ENCODE measurements at regions of chr3 and their contacts with region 1.

Region 1: DNA sequence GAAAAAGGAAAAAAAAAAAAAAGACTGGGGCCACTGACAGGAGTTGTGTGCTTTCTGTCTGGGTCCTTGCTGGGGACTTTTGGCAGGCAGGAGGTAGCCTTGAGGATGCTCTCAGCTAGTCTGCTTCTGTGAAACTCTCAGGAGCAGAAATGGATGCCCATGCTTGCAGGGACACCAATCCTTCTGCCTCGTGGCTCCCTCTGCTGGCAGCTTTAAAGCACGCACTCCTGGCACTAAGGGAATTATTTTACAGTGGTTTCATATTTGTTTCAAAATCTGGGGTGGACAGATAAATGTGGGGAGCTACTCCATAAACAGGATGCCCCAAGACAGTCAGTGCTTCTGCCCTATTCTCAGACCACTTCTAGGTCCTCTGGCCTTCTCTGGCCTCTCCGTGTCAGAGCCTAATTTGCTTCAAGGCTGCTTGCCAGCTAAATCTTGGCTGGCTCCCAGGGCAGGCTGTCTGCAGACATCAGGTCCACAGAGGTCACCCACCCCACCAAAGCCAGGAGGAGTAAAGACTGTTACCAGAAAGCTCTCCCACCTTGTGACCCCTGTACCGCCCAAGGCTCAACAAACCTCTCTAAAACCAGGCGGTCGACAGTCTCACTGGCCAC is 17.1 kb downstream of the TRAIP start:
- DNase-seq: peak; percentile 80 to 88 (median 85)
- ATAC-seq: peak; percentile 66 to 88 (median 83)
- H3K4me3 ChIP-seq: no peak overlapping the region
- H3K27ac ChIP-seq: peak overlapping the region in 9 of 12 donors; percentile 9 to 75 (median 42)
- H3K4me1 ChIP-seq: peaks cover 5 to 34% (median 23%) of the 10 kb centered on the region in 12 donors
- H3K27me3 ChIP-seq: no peaks in the 10 kb centered on the region
- CTCF ChIP-seq: peak; percentile 81 to 97 (median 91)
- POLR2A ChIP-seq: no peak

Region 2: DNA sequence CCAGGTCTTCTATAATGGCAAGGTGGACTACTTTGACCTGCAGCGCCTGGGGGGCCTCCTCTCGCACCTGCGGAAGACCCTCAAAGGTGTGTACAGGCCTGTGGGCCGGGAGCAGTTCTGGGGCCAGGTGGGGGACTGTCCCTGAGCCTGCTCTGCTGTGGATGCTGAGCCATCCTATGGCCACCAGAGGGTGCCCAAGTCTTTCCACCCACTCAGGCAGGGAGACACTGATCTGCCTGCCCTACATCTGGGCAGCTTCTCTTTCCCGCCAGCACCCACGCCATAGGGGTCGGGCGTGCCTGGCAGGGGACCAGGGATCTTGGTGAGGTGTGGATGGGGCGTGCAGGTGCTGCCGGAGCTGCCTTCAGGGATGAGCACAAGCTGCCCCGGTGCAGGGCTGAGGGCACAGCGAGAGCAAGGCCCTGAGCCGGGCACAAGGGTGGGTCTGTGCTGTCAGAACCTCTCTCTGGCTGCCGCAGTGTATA is 135.8 kb before region 1 on chr3:
- intact Hi-C with region 1: loop called in 5 of 10 experiments (anchors 2 to 10 kb)
- DNase-seq: peak in 3 of 5 donors; percentile 56 to 64 (median 56)
- ATAC-seq: peak; percentile 34 to 78 (median 64)
- H3K4me3 ChIP-seq: no peak overlapping the region
- H3K27ac ChIP-seq: no peak overlapping the region
- H3K4me1 ChIP-seq: peaks cover 0 to 21% (median 4%) of the 10 kb centered on the region in 12 donors
- H3K27me3 ChIP-seq: no peaks in the 10 kb centered on the region
- CTCF ChIP-seq: peak; percentile 59 to 80 (median 74)
- POLR2A ChIP-seq: no peak

Region 3: DNA sequence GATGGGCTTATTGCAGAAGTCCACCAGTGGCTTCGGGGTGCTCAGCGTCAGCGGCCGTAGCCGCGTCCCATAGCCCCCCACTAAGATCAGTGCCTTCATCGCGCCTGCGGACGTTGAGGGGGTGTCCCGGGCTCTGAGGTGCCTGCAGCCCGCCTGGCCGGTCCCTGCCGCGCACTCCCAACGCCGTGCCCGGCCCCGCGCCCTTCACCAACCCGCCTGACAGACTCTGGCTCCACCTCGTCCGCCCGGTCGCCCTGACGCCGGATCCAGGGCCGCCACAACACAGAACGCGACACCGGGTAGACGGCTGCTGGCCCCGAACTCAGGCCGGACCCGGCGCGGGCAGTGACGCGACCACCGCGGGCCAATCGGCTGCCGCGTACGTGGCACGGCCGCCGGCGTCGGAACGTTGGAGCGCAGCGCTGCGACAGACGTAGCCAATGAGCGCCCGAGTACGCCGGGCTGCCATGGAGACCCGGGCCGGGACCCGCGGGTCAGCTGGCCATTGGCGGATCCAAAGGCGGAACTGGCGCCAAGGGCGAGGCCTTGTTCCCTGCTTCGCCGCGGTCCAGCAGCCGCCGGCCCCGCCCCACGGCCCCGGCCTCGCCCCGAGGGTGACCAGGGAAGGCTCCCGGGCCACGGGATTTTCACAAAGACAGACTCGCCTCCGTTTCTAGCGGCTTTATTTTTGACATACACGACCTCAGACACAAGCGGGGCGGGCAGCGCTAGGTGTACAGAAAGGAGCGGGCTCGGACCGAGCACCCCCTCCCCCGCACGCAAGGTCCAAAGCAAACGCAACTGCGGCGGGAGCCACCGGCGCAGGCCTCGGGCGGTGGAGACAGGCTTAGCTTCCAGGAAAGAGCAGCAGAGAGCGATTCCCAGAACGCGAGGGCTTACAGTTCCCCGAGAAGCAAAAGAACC is 115.4 kb before region 1 on chr3 and contains the start of gene GMPPB:
- intact Hi-C with region 1: loop called in 1 of 10 experiments (anchors 10 kb)
- DNase-seq: peak; percentile 98 to 99 (median 99)
- ATAC-seq: peak; percentile 81 to 90 (median 88)
- H3K4me3 ChIP-seq: peak within 1 kb of the TSS; percentile 73 to 100 (median 96)
- H3K27ac ChIP-seq: peak within 1 kb of the TSS; percentile 60 to 98 (median 92)
- H3K4me1 ChIP-seq: peaks cover 11 to 37% (median 24%) of the 10 kb centered on the region in 12 donors
- H3K27me3 ChIP-seq: no peaks in the 10 kb centered on the region
- CTCF ChIP-seq: peak in 1 of 12 donors; percentile 2
- POLR2A ChIP-seq: peak in 1 of 2 donors; percentile 78
- total RNA-seq, gene GMPPB: 9.4 to 21.8 (median 13.7) TPM

Region 4: GRCh38 chr3:49802719-49803464 is 36.4 kb before region 1 on chr3 and contains the start of gene INKA1:
- intact Hi-C with region 1: loop called (anchors 1 to 2 kb)
- DNase-seq: peak; percentile 92 to 95 (median 93)
- ATAC-seq: peak; percentile 77 to 84 (median 82)
- H3K4me3 ChIP-seq: peak within 1 kb of the TSS; percentile 69 to 98 (median 84)
- H3K27ac ChIP-seq: peak within 1 kb of the TSS; percentile 86 to 99 (median 98)
- H3K4me1 ChIP-seq: peaks cover 23 to 58% (median 47%) of the 10 kb centered on the region in 12 donors
- H3K27me3 ChIP-seq: no peaks in the 10 kb centered on the region
- CTCF ChIP-seq: peak in 11 of 12 donors; percentile 88 to 97 (median 92)
- POLR2A ChIP-seq: peak in 1 of 2 donors; percentile 78
- total RNA-seq, gene INKA1: 1.1 to 5.0 (median 3.3) TPM

Region 5: DNA sequence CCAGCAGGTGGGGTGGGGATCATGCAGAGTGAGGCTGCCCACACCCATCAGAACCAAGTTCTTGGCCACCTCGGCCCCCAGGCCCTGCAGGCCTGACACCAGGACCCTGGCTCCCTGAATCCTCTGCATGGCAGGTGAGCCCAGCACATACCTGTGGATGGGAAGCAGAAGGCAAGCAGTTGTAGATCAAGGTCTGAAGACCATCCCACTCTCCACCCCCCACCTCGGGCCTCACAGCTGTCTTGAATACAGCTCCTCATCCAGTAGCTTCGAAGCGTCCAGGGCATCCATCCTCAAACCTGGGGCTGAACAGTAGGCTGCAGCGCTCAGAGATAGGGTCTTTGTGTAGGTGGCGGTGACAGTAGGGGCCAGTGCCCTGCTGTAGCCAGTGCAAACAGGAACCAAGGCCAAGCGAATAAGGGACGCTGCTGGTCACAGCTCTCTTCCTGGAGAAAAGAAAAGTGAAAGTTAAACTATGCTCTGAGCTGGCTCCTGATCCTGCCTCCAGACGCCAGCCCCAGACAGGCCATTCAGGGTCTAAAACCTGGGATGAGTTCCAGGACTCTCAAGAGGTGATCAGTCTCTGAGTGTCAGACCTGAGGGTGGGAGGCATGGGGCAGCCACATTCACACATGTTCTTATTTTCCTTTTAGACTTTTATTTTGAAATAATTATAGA is 25.7 kb before region 1 on chr3 and contains the start of gene UBA7:
- intact Hi-C with region 1: loop called in 1 of 10 experiments (anchors 2 kb)
- DNase-seq: peak; percentile 61 to 74 (median 69)
- ATAC-seq: peak; percentile 70 to 95 (median 90)
- H3K4me3 ChIP-seq: peak within 1 kb of the TSS; percentile 27 to 80 (median 57)
- H3K27ac ChIP-seq: peak within 1 kb of the TSS; percentile 71 to 92 (median 82)
- H3K4me1 ChIP-seq: peaks cover 8 to 33% (median 21%) of the 10 kb centered on the region in 12 donors
- H3K27me3 ChIP-seq: no peaks in the 10 kb centered on the region
- CTCF ChIP-seq: no peak
- POLR2A ChIP-seq: no peak
- total RNA-seq, gene UBA7: 13.7 to 72.1 (median 22.1) TPM

Region 6: GRCh38 chr3:49886922-49887265 is 47.6 kb after region 1 on chr3:
- intact Hi-C with region 1: no loop called
- DNase-seq: no peak
- ATAC-seq: no peak
- H3K4me3 ChIP-seq: no peak overlapping the region
- H3K27ac ChIP-seq: no peak overlapping the region
- H3K4me1 ChIP-seq: peaks cover 0 to 18% (median 8%) of the 10 kb centered on the region in 12 donors
- H3K27me3 ChIP-seq: no peaks in the 10 kb centered on the region
- CTCF ChIP-seq: no peak
- POLR2A ChIP-seq: no peak

Region 7: DNA sequence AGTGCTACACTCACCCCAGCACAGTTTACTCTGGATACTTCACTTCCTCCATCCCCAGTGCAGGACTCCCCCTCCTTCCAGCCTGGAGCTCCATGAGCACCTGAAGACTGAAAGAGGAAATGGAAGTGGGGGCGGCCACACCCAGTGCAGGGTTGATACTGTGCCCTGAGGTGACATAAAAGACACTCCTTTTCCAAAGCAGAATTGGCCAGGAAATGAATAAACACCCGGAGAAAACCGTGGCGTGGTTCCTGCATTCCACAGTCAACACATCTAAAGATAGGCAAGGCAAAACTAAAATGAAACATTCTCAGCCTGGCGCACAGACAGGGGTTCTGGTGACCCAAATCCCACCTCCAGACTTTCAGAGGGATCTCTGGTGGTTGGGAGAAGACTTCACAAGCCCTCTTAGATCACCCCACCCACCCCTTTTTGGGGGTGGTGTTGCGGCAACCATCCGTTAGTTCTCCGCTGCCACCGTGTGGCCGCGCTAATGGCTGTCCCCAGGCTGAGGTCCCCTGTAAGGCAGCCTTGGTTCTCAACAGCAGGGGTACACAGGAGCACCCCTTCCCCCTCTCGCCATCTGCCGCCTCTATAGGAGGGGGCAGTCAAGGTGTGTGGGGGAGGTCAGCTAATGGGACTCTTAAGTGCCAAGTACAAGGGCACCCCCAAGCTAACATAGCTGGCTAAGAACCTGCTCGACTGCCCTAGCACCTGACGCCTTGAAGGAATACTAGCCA is 66.9 kb after region 1 on chr3:
- intact Hi-C with region 1: loop called (anchors 2 to 10 kb)
- DNase-seq: peak in 3 of 5 donors; percentile 46 to 57 (median 54)
- ATAC-seq: peak in 3 of 4 donors; percentile 47 to 72 (median 60)
- H3K4me3 ChIP-seq: peak overlapping the region in 10 of 12 donors; percentile 13 to 45 (median 32)
- H3K27ac ChIP-seq: peak overlapping the region in 11 of 12 donors; percentile 11 to 72 (median 54)
- H3K4me1 ChIP-seq: peaks cover 4 to 36% (median 23%) of the 10 kb centered on the region in 12 donors
- H3K27me3 ChIP-seq: no peaks in the 10 kb centered on the region
- CTCF ChIP-seq: peak; percentile 40 to 87 (median 72)
- POLR2A ChIP-seq: no peak

Region 8: DNA sequence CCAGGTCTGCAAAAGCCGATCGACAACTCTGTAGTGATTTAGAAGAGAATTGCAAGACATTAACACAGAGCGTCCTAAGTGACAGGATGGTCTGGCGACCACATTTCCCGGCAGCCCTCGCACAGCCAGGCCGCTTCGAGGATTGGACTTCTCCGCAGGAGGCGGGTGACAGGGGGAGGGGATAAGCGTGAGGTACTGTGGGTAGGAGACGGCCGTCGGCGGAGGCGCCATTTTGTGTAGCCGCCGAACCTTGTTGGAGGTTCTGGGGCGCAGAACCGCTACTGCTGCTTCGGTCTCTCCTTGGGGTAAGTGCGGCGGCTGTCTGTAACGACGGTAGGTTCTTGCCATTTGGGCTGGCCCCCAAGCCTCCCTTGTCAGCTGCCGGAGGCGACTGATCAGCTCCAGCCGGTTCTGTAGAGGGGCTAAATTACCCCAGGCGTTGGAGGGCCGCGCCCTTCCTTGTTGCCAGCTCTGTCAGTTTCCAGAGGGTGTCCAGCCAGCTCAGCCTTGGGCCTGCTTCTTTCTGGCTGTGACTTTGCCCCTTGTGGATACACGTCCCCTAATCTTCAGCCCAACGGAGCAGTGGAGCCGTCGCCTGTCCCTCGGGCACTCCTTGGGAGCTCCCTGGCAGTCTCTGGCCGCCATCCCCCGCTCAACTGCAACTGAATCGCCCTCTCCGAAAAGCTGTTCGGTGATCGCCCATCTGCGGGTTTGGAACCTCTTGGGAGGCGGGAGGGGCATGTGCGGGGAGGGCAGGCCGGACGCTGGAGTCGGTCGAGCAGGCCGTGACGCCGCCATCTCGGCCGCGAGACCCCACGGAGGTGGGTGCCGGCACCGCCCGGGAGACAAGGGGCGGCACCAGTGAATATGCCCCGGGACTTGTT is 249.7 kb after region 1 on chr3 and contains the start of gene RBM5:
- intact Hi-C with region 1: loop called in 1 of 10 experiments (anchors 10 kb)
- DNase-seq: peak; percentile 94 to 96 (median 95)
- ATAC-seq: peak; percentile 99 to 100 (median 100)
- H3K4me3 ChIP-seq: peak within 1 kb of the TSS; percentile 61 to 99 (median 89)
- H3K27ac ChIP-seq: peak within 1 kb of the TSS; percentile 91 to 98 (median 96)
- H3K4me1 ChIP-seq: peaks cover 2 to 29% (median 21%) of the 10 kb centered on the region in 12 donors
- H3K27me3 ChIP-seq: no peaks in the 10 kb centered on the region
- CTCF ChIP-seq: peak in 1 of 12 donors; percentile 16
- POLR2A ChIP-seq: peak in 1 of 2 donors; percentile 78
- total RNA-seq, gene RBM5: 37.4 to 77.3 (median 55.8) TPM

Measured in heart left ventricle (tissue), 16 donors.